Activated T-helper 1 cell treated with anti-CD3 and anti-CD28 coated beads, Interleukin-12 subunit alpha, Interleukin-12 subunit beta, Interleukin-2, Interleukin-4 antibody, amounts not matched to agents 30 ng/mL and 10 ng/mL and 1 ng/mL, durations not matched to agents 14 hours and 24 hours and 36 hours (primary cell): ENCODE measurements at regions of chr12 and their contacts with region 1.

Region 1: GRCh38 chr12:62320054-62320453 is 59.9 kb downstream of the USP15 start:
- DNase-seq: no peak
- H3K4me3 Mint-ChIP-seq: no peak overlapping the region
- H3K27ac Mint-ChIP-seq: peak overlapping the region; percentile 6
- H3K4me1 Mint-ChIP-seq: peaks cover 30% of the 10 kb centered on the region
- H3K27me3 Mint-ChIP-seq: no peaks in the 10 kb centered on the region

Region 2: DNA sequence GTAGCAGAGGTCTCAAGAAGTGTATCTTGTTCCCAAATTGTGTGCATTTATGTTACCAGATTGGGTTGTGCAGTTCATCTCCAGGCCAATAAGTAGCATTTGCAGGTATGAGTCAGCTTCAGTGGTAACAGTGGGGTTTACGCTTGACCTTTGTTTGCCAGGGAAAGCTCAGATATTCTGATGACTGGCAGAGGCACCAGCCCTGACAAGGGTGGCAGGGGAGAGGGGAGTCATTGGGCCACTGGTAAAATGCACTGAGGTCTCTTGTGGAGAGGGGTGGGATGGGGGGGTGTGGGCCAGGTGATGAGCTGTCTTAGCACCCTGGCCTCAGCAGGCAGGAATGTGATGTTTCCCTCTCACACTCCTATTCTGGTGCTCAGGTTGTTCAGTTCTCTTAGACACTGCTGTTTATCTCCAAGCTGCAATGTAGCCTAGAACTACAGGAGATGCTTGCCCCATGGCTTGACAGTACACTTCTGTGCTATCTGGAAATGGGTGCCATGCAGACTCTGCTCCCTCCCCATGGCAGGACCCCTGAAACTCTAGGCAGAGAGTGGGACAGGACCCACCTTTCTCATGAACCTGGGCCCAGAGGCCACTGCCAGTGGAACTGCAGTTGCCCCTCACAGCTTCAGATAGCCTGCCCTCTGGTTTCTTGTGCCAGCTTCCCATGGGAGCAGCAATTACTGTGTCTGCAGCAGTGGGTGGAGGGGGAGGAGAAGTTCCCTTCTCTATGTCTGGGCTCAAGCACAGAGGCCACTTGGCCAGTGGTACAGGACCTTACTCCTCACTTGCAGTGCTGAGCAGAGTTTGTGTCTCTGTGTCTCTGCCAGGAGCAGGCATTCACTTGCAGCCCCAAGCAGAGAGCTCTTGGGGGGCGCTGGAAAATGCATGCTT is 27.9 kb before region 1 on chr12:
- intact Hi-C with region 1: no loop called
- DNase-seq: no peak
- H3K4me3 Mint-ChIP-seq: no peak overlapping the region
- H3K27ac Mint-ChIP-seq: peak overlapping the region; percentile 57
- H3K4me1 Mint-ChIP-seq: peaks cover 86% of the 10 kb centered on the region
- H3K27me3 Mint-ChIP-seq: no peaks in the 10 kb centered on the region

Region 3: DNA sequence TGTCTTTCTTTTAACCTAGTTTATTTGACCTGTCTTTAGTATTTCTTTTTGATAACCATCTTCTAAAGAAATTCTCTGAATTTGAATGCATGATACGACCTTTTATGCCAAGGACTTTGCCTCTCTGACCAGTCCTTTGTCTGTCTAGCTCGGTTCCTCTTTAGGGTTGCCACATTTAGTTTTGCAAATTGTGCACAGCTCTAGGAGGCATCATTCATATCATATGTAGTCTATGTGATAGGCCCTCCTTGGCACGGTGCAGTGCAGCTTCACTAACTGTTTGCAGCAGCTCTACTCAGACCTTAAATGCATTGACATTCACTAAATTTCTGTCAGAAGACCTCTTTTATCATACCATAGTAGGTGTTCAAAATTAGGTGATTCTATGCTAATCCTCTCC is 15.7 kb after region 1 on chr12:
- intact Hi-C with region 1: loop called (anchors 2 kb)
- DNase-seq: no peak
- H3K4me3 Mint-ChIP-seq: no peak overlapping the region
- H3K27ac Mint-ChIP-seq: no peak overlapping the region
- H3K4me1 Mint-ChIP-seq: peaks cover 57% of the 10 kb centered on the region
- H3K27me3 Mint-ChIP-seq: no peaks in the 10 kb centered on the region

Region 4: DNA sequence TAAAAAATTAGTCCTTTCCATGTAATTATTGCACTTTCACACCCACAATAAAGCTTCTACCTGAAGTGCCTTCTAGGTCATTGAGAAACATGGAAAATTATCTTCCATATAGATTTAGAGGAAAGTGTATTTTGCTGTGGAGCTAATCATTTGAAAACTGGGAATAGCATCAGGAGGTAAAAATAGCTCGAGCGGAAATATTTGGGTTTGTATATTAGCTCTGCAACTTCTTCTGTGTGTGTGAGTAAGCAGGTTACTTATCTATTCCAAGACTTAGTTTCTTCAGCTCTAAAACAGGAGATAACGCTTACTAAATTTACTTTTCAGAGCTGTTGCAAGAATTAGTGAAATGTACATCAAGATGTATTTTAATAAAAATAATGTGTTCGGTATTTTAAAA is 51.6 kb after region 1 on chr12:
- intact Hi-C with region 1: no loop called
- DNase-seq: no peak
- H3K4me3 Mint-ChIP-seq: no peak overlapping the region
- H3K27ac Mint-ChIP-seq: no peak overlapping the region
- H3K4me1 Mint-ChIP-seq: peaks cover 29% of the 10 kb centered on the region
- H3K27me3 Mint-ChIP-seq: no peaks in the 10 kb centered on the region